MCF 10A (cell line): ENCODE measurements at regions of chr5 and their contacts with region 1.

Region 1: GRCh38 chr5:127867389-127867788 is 164.2 kb downstream of the CCDC192 start:
- DNase-seq: peak; percentile 51
- H3K4me3 Mint-ChIP-seq: no peak overlapping the region
- H3K27ac Mint-ChIP-seq: no peak overlapping the region
- H3K4me1 Mint-ChIP-seq: peaks cover 21% of the 10 kb centered on the region
- H3K27me3 Mint-ChIP-seq: no peaks in the 10 kb centered on the region
- CTCF ChIP-seq: no peak

Region 2: GRCh38 chr5:127777957-127778356 is 89.4 kb before region 1 on chr5:
- CTCF ChIA-PET with region 1: no interaction called
- POLR2A ChIA-PET with region 1: no interaction called
- intact Hi-C with region 1: no loop called
- DNase-seq: no peak
- H3K4me3 Mint-ChIP-seq: no peak overlapping the region
- H3K27ac Mint-ChIP-seq: no peak overlapping the region
- H3K4me1 Mint-ChIP-seq: no peaks in the 10 kb centered on the region
- H3K27me3 Mint-ChIP-seq: peaks cover 39% of the 10 kb centered on the region
- CTCF ChIP-seq: no peak

Region 3: GRCh38 chr5:127796211-127796610 is 71.2 kb before region 1 on chr5:
- CTCF ChIA-PET with region 1: no interaction called
- POLR2A ChIA-PET with region 1: interaction called, 3 read pairs
- intact Hi-C with region 1: loop called (anchors 2 kb)
- DNase-seq: no peak
- H3K4me3 Mint-ChIP-seq: no peak overlapping the region
- H3K27ac Mint-ChIP-seq: no peak overlapping the region
- H3K4me1 Mint-ChIP-seq: no peaks in the 10 kb centered on the region
- H3K27me3 Mint-ChIP-seq: no peaks in the 10 kb centered on the region
- CTCF ChIP-seq: no peak